Gastrocnemius medialis (tissue), 4 donors: ENCODE measurements at regions of chr10 and their contacts with region 1.

Region 1: GRCh38 chr10:48306265-48306869 is at the start of gene MAPK8:
- DNase-seq: peak; percentile 82 to 92
- ATAC-seq: peak; percentile 94 to 95
- H3K4me3 ChIP-seq: peak within 1 kb of the TSS; percentile 76 to 81 (median 79)
- H3K27ac ChIP-seq: peak within 1 kb of the TSS; percentile 93 to 98 (median 96)
- H3K4me1 ChIP-seq: peaks cover 34 to 38% of the 10 kb centered on the region in 2 donors
- H3K27me3 ChIP-seq: no peaks in the 10 kb centered on the region
- CTCF ChIP-seq: no peak
- POLR2A ChIP-seq: peak; percentile 96 to 98
- total RNA-seq, gene MAPK8: 25.6 to 52.1 (median 35.4) TPM

Region 2: DNA sequence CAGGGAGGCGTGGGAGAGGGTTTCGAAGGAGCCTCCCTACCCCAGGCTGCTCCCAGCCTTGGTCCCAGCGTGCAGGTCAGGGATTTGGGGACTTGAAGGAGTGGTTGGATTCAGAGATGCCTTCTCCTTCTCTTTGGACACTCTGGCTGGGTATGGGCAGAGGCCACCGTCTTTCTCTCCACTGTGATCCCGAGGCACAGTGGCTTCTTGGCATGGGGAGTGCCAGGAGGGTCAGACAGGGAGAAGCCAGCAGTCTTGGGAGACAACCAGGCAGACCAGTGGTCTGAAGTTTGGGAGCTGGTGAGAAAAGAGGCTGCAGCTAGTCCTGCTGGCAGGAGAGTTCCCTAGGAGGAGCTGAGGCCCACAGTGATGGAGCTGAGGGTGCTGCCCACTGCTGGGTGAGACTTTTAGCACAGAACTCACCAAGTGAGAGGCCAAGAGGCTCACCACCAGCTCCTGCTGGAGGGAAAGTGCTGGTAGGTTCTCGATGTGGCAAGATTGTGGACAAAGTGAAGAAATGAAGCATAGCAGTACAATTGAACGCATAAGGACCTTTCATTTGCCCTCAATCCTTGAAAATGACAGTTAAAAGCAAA is 343.1 kb after region 1 on chr10:
- in situ Hi-C with region 1: no loop called
- intact Hi-C with region 1: no loop called
- DNase-seq: no peak
- ATAC-seq: no peak
- H3K4me3 ChIP-seq: no peak overlapping the region
- H3K27ac ChIP-seq: no peak overlapping the region
- H3K4me1 ChIP-seq: no peaks in the 10 kb centered on the region
- H3K27me3 ChIP-seq: no peaks in the 10 kb centered on the region
- CTCF ChIP-seq: no peak
- POLR2A ChIP-seq: no peak

Region 3: DNA sequence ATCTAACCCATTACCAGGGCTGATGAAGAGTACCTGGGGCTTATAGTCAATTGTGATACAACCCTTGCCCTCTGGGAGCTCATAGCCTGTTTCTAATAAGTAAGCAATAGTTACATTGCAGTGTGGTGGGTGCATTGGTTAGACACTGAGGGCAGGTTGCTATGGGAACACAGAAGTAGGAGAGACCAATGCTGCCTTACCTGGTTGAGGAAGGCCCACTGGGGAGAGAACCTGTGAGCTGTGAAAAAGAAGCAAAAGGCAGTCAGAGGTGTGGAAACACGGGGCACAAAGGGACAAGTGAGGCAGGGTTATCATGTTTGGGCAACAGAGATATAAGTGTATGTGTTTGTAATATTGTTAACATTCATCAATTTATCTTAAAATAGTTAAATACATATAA is 430.2 kb after region 1 on chr10:
- in situ Hi-C with region 1: no loop called
- intact Hi-C with region 1: no loop called
- DNase-seq: no peak
- ATAC-seq: no peak
- H3K4me3 ChIP-seq: no peak overlapping the region
- H3K27ac ChIP-seq: no peak overlapping the region
- H3K4me1 ChIP-seq: no peaks in the 10 kb centered on the region
- H3K27me3 ChIP-seq: no peaks in the 10 kb centered on the region
- CTCF ChIP-seq: no peak
- POLR2A ChIP-seq: no peak

Region 4: GRCh38 chr10:48890888-48891850 is 584.8 kb after region 1 on chr10:
- in situ Hi-C with region 1: no loop called
- intact Hi-C with region 1: no loop called
- DNase-seq: no peak
- ATAC-seq: no peak
- H3K4me3 ChIP-seq: no peak overlapping the region
- H3K27ac ChIP-seq: no peak overlapping the region
- H3K4me1 ChIP-seq: no peaks in the 10 kb centered on the region
- H3K27me3 ChIP-seq: no peaks in the 10 kb centered on the region
- CTCF ChIP-seq: no peak
- POLR2A ChIP-seq: no peak

Region 5: DNA sequence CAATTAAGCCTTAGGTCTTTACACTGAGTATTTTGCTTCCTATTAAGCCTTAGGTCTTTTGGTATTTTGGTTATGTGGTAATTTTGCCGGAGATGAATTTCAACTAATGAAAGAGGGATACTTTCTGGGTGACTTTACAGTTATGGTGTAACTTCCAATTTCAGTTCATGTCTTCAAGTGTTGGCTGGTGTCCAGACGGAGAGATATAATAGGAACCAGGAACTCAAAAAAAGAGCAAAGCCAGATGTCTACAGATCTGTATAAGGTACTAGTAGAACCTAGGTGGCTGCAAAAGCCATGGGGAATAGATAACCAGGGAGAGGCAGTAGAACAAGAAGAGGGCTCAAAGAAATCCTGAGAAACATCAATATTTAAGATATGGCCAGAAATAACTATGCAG is 1220.3 kb after region 1 on chr10:
- in situ Hi-C with region 1: no loop called
- intact Hi-C with region 1: loop called (anchors 10 kb)
- DNase-seq: no peak
- ATAC-seq: no peak
- H3K4me3 ChIP-seq: no peak overlapping the region
- H3K27ac ChIP-seq: no peak overlapping the region
- H3K4me1 ChIP-seq: peaks cover 0 to 11% of the 10 kb centered on the region in 2 donors
- H3K27me3 ChIP-seq: no peaks in the 10 kb centered on the region
- CTCF ChIP-seq: no peak
- POLR2A ChIP-seq: no peak